Sciatic nerve (tissue), 2 donors: ENCODE measurements at regions of chr7 and their contacts with region 1.

Region 1: GRCh38 chr7:129734400-129734799 is 122.9 kb downstream of the NRF1 start:
- DNase-seq: no peak
- ATAC-seq: no peak

Region 2: DNA sequence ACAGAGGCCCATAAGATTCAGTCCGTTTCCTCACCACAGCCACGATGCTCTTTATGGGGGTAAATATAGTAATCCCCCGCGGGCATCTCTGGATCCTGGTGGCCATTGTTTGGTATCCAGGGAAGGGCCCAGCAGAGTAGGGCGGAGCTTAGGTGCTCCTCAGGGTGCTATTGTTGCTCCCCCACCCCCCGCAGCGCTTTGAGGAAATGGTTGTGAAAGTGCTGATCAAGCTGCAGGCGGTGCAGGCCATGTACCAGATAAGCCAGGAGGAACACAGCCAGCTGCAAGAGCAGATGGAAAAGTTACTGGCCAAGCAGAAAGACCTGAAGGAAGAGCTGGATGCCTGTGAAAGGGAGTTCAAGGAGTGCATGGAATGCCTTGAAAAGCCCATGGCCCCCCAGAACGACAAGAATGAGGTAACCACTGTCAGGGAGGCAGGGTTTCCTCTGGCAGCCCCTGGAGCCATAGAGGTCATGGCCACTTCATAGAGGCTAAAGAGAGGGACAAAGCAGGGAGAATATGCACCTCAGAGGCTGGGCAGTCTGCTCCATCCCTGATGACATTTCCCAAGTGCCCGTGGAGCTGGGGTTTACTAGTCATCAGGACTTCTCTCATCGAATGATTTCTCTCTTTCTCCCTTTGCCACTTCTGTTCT is 921.8 kb before region 1 on chr7:
- intact Hi-C with region 1: loop called (anchors 5 kb)
- DNase-seq: no peak
- ATAC-seq: peak; percentile 73

Region 3: DNA sequence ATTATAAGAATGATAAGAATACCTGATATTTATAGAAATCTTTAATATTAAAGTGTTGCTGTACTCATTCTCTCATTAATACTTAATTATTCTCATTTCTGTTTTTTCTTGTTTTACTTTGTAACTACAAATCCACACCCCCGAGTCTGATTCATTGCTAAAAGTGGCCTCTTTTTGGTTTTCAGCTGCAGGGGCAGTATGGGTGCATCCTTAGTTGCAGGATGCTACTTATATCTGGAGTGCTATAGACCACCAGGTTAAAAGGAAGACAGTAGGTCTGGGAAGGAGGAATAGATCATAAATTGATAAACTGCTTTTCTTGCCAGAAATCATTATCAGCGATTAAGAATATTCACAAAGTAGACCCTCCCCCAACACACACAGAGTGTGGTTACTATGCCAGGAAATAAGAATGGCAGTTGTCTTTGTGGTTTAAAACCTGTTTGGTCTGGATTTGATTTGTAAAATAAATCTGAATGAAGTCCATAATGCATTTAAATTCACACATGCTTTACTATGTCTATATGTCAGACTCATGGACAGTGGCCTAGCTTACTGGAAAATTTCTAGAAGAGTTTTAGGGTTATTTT is 26.4 kb before region 1 on chr7:
- intact Hi-C with region 1: no loop called
- DNase-seq: no peak
- ATAC-seq: no peak